GM12878 (cell line): ENCODE measurements at regions of chr13 and their contacts with region 1.

Region 1: DNA sequence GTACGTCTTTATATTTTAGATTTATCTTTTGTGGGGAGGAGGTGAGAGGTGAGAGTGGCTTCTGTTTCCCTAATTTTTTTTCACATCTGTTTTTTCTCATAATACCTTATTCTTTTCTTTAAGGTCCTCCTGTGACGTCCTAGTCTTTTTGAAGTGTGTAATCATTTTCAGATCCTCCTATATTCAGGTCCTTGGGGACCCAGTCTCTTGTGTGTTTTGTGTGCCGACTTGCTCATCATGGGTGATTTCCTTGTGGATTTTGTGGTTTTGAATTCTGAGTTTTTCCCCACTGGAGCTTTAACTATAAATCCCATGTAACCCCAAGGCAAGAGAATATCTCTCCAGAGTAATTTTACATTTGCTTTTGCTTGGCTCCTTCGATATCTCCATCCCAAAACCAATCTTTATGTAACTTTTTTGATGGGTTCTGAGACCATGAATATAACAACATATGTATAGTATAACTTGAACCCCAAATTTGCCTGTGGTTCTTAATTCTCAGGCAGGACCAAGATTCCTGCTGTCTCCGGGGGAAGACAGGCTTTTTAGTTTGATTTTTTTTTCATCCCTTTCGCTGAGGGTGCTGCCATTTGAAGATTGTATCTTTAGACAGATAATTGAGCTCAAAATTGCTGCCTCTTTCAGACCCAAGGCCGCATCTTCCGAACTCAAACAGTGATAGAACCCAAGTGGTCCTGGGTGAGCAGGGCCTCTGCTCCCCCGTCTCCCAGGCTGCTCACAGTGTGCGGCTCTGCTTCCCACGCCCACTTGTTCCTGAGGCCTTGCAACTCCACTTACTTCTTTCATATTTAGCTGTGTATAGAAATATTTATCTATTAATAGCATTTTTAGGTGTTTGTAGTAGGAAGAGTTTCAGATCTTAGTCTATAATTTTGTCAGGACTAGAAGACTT is 59.1 kb upstream of the GPR183 start:
- DNase-seq: peak; percentile 87
- ATAC-seq: peak; percentile 67
- H3K4me3 ChIP-seq: peak overlapping the region; percentile 23; the same call in 1 of the 2 replicates
- H3K27ac ChIP-seq: peak overlapping the region; percentile 93
- H3K4me1 ChIP-seq: peaks cover 54% of the 10 kb centered on the region
- H3K27me3 ChIP-seq: no peaks in the 10 kb centered on the region
- CTCF ChIP-seq: no peak
- EP300 ChIP-seq: peak; percentile 51 to 78; a peak in 1 of 4 replicates
- POLR2A ChIP-seq: 0 out of 2 replicates have a peak, but pooled peaks have one; percentile 19
- RAD21 ChIP-seq: peak; percentile 5; the same call in 1 of the 2 replicates

Region 2: GRCh38 chr13:99200432-99201167 is 165.7 kb before region 1 on chr13 and contains the start of gene UBAC2:
- CTCF ChIA-PET with region 1: no interaction called
- POLR2A ChIA-PET with region 1: interaction called, 3 read pairs
- RAD21 ChIA-PET with region 1: no interaction called
- SMC1A ChIA-PET with region 1: no interaction called
- in situ Hi-C with region 1: no loop called
- intact Hi-C with region 1: loop called (anchors 5 kb)
- DNase-seq: peak; percentile 89
- ATAC-seq: peak; percentile 86
- H3K4me3 ChIP-seq: peak within 1 kb of the TSS; percentile 94
- H3K27ac ChIP-seq: peak within 1 kb of the TSS; percentile 84
- H3K4me1 ChIP-seq: peaks cover 29% of the 10 kb centered on the region
- H3K27me3 ChIP-seq: no peaks in the 10 kb centered on the region
- CTCF ChIP-seq: 0 out of 6 replicates have a peak, but pooled peaks of 1 of the 3 experiments have one; percentile 2
- EP300 ChIP-seq: 0 out of 4 replicates have a peak, but pooled peaks of 1 of the 2 experiments have one; percentile 7
- POLR2A ChIP-seq: peak; percentile 100
- RAD21 ChIP-seq: no peak
- polyA plus RNA-seq, gene UBAC2: 3.0 to 4.1 TPM

Region 3: DNA sequence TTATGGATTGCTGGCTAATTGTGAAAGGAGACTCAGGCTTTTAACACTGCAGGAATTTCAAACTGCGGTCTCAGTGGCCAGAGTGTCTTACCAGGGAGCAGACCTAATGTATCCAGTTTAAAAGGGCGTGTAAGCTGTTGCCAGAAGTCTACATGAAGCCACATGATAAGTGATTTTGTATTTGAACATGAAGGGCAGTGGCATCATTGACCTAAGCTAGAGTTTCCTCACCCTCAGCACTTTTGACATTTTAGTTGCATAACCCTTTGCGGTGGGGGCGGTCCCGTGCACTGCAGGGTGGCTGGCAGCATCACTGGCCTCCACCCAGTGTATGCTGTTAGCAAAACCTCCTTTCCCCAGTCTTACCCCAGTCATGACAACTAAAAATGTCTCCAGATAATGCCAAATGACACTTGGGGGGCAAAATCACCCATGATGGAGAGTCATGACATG is 84.5 kb before region 1 on chr13:
- CTCF ChIA-PET with region 1: interaction called, 7 read pairs
- POLR2A ChIA-PET with region 1: interaction called, 11 read pairs
- RAD21 ChIA-PET with region 1: interaction called, 19 read pairs
- SMC1A ChIA-PET with region 1: interaction called, 21 read pairs
- in situ Hi-C with region 1: no loop called
- intact Hi-C with region 1: no loop called
- DNase-seq: no peak
- ATAC-seq: peak; percentile 89
- H3K4me3 ChIP-seq: peak overlapping the region; percentile 8
- H3K27ac ChIP-seq: peak overlapping the region; percentile 79
- H3K4me1 ChIP-seq: peaks cover 53% of the 10 kb centered on the region
- H3K27me3 ChIP-seq: no peaks in the 10 kb centered on the region
- CTCF ChIP-seq: no peak
- EP300 ChIP-seq: no peak
- POLR2A ChIP-seq: no peak
- RAD21 ChIP-seq: no peak

Region 4: DNA sequence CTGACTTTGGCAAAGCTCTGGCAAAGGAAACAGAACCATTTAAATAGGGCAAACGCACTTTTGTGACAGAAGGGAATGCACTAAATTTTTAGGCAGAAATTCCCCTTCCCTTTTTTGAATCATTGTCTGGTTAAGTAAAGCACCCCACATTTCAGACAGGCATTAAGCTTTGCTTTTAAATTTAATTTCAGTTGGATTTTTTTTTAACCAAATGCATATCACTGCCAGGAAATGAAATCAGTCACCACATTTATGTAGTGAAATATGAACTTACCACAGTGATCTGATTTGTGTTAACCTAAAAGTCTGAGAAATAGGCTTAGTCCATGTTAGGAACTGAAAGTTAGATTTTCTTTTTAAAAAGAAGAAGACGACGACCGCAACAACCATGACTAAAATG is 69.9 kb before region 1 on chr13:
- CTCF ChIA-PET with region 1: interaction called, 18 read pairs
- POLR2A ChIA-PET with region 1: interaction called, 15 read pairs
- RAD21 ChIA-PET with region 1: interaction called, 38 read pairs
- SMC1A ChIA-PET with region 1: interaction called, 85 read pairs
- in situ Hi-C with region 1: no loop called
- intact Hi-C with region 1: no loop called
- DNase-seq: no peak
- ATAC-seq: peak; percentile 15
- H3K4me3 ChIP-seq: peak overlapping the region; percentile 58; the same call in 1 of the 2 replicates
- H3K27ac ChIP-seq: peak overlapping the region; percentile 62
- H3K4me1 ChIP-seq: peaks cover 14% of the 10 kb centered on the region
- H3K27me3 ChIP-seq: no peaks in the 10 kb centered on the region
- CTCF ChIP-seq: no peak
- EP300 ChIP-seq: no peak
- POLR2A ChIP-seq: no peak
- RAD21 ChIP-seq: peak; percentile 2; the same call in 1 of the 2 replicates

Region 5: GRCh38 chr13:99307648-99308339 is 58.5 kb before region 1 on chr13:
- CTCF ChIA-PET with region 1: interaction called, 29 read pairs
- POLR2A ChIA-PET with region 1: interaction called, 59 read pairs
- RAD21 ChIA-PET with region 1: interaction called, 42 read pairs
- SMC1A ChIA-PET with region 1: interaction called, 85 read pairs
- in situ Hi-C with region 1: loop called (anchors 5 kb)
- intact Hi-C with region 1: loop called (anchors 1 kb)
- DNase-seq: no peak
- ATAC-seq: peak; percentile 50
- H3K4me3 ChIP-seq: peak overlapping the region; percentile 98
- H3K27ac ChIP-seq: peak overlapping the region; percentile 93
- H3K4me1 ChIP-seq: peaks cover 49% of the 10 kb centered on the region
- H3K27me3 ChIP-seq: no peaks in the 10 kb centered on the region
- CTCF ChIP-seq: no peak
- EP300 ChIP-seq: no peak
- POLR2A ChIP-seq: no peak; the same call in 1 of the 2 replicates
- RAD21 ChIP-seq: no peak

Region 6: GRCh38 chr13:99331881-99332293 is 34.4 kb before region 1 on chr13:
- CTCF ChIA-PET with region 1: interaction called, 10 read pairs
- POLR2A ChIA-PET with region 1: no interaction called
- RAD21 ChIA-PET with region 1: interaction called, 31 read pairs
- SMC1A ChIA-PET with region 1: interaction called, 36 read pairs
- in situ Hi-C with region 1: no loop called
- intact Hi-C with region 1: no loop called
- DNase-seq: peak; percentile 79
- ATAC-seq: peak; percentile 89
- H3K4me3 ChIP-seq: no peak overlapping the region
- H3K27ac ChIP-seq: peak overlapping the region; percentile 66; the same call in 1 of the 2 replicates
- H3K4me1 ChIP-seq: peaks cover 21% of the 10 kb centered on the region
- H3K27me3 ChIP-seq: no peaks in the 10 kb centered on the region
- CTCF ChIP-seq: no peak
- EP300 ChIP-seq: peak; percentile 39 to 52; a peak in 2 of 4 replicates
- POLR2A ChIP-seq: no peak
- RAD21 ChIP-seq: no peak

Region 7: DNA sequence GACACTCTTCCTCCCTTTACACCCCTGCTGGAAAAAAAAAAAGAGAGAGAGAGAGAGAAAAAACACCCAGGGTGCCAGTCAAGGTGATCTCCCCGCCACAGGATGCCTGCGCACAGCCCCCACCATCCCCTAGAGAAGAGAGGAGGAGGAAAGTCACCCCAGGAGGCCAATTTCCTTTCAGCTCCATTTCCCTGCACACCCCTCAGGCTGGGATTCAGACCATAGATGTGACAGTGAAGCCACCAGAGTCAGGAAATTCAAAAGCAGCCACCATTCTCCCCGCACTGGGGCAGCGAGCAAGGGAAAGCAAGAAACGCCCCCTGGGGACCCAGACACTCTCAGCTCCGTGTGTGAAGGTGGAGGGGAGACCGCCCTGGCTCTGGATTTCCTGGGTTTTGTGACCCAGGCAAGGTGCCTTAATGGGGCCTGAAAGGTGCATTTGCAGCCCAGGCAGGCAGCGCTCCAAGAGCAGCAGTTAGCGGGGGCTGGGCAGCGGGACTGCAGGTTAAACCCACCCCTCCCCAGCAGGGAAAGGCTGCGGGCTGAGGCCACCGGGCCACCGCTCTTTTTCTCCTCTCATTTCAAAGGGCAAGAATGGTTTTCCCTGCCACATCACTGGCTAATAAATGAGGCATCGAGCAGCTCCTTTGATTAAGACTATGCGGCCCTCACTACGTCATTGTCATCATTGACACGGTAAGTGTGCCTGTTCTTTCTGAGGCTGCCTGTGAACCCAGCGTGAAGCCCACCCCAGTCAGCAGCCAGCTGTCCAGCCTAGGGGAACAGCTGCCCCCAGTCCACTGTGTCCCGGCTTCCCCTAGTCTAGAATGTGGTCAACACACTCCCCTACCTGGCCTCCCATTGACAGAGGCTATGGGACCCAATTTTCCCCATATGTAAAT is 51.1 kb after region 1 on chr13:
- CTCF ChIA-PET with region 1: no interaction called
- POLR2A ChIA-PET with region 1: interaction called, 5 read pairs
- RAD21 ChIA-PET with region 1: interaction called, 10 read pairs
- SMC1A ChIA-PET with region 1: interaction called, 19 read pairs
- in situ Hi-C with region 1: no loop called
- intact Hi-C with region 1: no loop called
- DNase-seq: no peak
- ATAC-seq: no peak
- H3K4me3 ChIP-seq: no peak overlapping the region
- H3K27ac ChIP-seq: no peak overlapping the region
- H3K4me1 ChIP-seq: peaks cover 40% of the 10 kb centered on the region
- H3K27me3 ChIP-seq: no peaks in the 10 kb centered on the region
- CTCF ChIP-seq: no peak
- EP300 ChIP-seq: no peak
- POLR2A ChIP-seq: no peak
- RAD21 ChIP-seq: no peak